ENCODE measurements at regions of chr1 and their contacts with region 1.

Region 1: GRCh38 chr1:94926915-94927404 is at the start of gene CNN3:
- DNase-seq: peak; percentile 94 to 95
- H3K4me3 ChIP-seq: peak within 1 kb of the TSS; percentile 67 to 91
- H3K27ac ChIP-seq: peak within 1 kb of the TSS; percentile 98 to 100
- H3K4me1 ChIP-seq: no peaks in the 10 kb centered on the region
- H3K27me3 ChIP-seq: no peaks in the 10 kb centered on the region
- CTCF ChIP-seq: peak in 1 of 4 experiments; percentile 47
- POLR2A ChIP-seq: peak; percentile 98 to 100
- total RNA-seq, gene CNN3: 334 to 604 (median 452) TPM

Region 2: GRCh38 chr1:94854458-94855306 is 72.3 kb before region 1 on chr1:
- intact Hi-C with region 1: loop called (anchors 10 kb)
- DNase-seq: peak; percentile 88 to 92
- H3K4me3 ChIP-seq: peak overlapping the region; percentile 38 to 40
- H3K27ac ChIP-seq: peak overlapping the region; percentile 88 to 89
- H3K4me1 ChIP-seq: peaks cover 0 to under 1% of the 10 kb centered on the region in 2 donors
- H3K27me3 ChIP-seq: no peaks in the 10 kb centered on the region
- CTCF ChIP-seq: peak; percentile 88 to 99 (median 98)
- POLR2A ChIP-seq: no peak

Region 3: GRCh38 chr1:94873522-94874351 is 53.2 kb before region 1 on chr1:
- intact Hi-C with region 1: no loop called
- DNase-seq: peak in 1 of 2 donors; percentile 43
- H3K4me3 ChIP-seq: no peak overlapping the region
- H3K27ac ChIP-seq: peak overlapping the region; percentile 36 to 68
- H3K4me1 ChIP-seq: no peaks in the 10 kb centered on the region
- H3K27me3 ChIP-seq: no peaks in the 10 kb centered on the region
- CTCF ChIP-seq: no peak
- POLR2A ChIP-seq: no peak

Region 4: GRCh38 chr1:95023399-95024043 is 96.6 kb after region 1 on chr1:
- intact Hi-C with region 1: loop called (anchors 10 kb)
- DNase-seq: peak in 1 of 2 donors; percentile 43
- H3K4me3 ChIP-seq: no peak overlapping the region
- H3K27ac ChIP-seq: peak overlapping the region; percentile 85 to 92
- H3K4me1 ChIP-seq: peaks cover 0 to 22% of the 10 kb centered on the region in 2 donors
- H3K27me3 ChIP-seq: no peaks in the 10 kb centered on the region
- CTCF ChIP-seq: no peak
- POLR2A ChIP-seq: no peak

Region 5: DNA sequence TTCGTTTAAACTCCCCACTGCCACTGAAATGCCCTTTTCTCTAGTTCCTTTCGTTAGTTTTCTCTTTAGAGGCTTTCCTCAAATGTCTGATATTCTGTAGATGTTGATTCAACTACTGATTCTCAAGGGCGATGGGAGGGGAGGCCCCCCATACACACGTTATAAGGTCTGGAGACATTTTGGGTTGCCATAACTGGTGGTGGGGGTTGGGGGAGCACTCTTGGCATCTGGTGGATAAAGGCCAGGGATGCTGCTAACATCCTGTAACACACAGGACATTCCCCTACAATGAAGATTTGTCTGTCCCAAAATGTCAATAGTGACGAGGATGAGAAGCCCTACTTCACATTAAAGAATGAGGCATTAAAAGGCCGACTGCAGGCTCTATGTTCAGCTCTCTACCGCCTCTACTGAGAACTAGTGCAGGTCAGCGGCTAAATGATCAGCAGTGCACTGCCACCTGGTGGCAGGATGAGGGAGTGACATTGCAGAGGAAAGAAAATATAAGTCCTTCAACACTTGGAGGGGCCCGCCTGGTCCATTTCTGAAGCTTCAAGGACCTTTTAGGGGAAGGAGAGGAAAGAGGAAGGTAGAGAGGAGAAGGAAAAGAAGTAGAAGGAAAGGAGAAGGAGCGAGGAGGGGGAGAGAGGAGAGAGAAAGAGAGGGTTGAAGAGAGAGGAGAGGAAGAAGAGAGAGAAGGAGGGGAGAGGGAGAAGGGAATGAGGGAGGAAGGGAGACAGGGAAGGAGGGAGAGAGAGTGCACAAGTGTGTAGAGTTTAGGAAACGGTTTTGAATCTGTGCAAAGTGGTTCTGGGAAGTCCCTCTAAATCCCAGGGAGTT is 116.4 kb after region 1 on chr1:
- intact Hi-C with region 1: loop called (anchors 5 kb)
- DNase-seq: peak; percentile 84 to 92
- H3K4me3 ChIP-seq: no peak overlapping the region
- H3K27ac ChIP-seq: peak overlapping the region; percentile 78 to 85
- H3K4me1 ChIP-seq: peaks cover 0 to 13% of the 10 kb centered on the region in 2 donors
- H3K27me3 ChIP-seq: no peaks in the 10 kb centered on the region
- CTCF ChIP-seq: peak; percentile 97 to 99 (median 98)
- POLR2A ChIP-seq: no peak

Region 6: DNA sequence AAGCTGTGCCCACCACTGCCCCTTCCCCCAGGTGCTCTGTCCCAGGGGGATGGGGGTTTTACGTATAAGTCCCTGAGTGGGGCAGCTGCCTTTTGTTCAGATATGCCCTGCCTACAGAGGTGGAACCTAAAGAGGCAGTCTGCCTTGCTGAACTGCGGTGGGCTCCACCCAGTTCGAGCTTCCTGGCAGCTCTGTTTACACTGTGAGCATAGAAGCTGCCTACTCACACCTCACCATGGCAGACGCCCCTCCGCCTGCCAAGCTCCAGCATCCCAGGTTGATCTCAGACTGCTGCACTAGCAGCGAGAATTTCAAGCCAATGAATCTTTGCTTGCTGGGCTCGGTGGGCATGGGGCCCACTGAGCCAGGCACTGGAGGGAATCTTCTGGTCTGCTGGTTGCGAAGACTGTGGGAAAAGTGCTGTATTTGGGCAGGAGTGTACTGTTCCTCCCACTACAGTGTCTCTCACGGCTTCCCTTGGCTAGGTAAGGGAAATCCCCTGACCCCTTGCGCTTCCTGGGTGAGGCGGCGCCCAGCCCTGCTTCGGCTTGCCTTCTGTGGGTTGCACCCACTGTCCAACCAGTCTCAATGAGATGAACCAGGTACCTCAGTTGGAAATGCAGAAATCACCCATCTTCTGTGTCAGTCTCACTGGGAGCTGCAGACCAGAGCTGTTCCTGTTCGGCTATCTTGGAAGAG is 289.5 kb after region 1 on chr1:
- intact Hi-C with region 1: no loop called
- DNase-seq: no peak
- H3K4me3 ChIP-seq: no peak overlapping the region
- H3K27ac ChIP-seq: no peak overlapping the region
- H3K4me1 ChIP-seq: no peaks in the 10 kb centered on the region
- H3K27me3 ChIP-seq: no peaks in the 10 kb centered on the region
- CTCF ChIP-seq: no peak
- POLR2A ChIP-seq: no peak

Measured in uterus (tissue), 4 donors.